ENCODE measurements at regions of chr7 and their contacts with region 1.

Region 1: GRCh38 chr7:69598081-69598486 is at the start of gene AUTS2:
- DNase-seq: peak; percentile 94
- H3K4me3 ChIP-seq: peak within 1 kb of the TSS; percentile 97
- H3K27ac ChIP-seq: peak within 1 kb of the TSS; percentile 58
- H3K4me1 ChIP-seq: peaks cover 35% of the 10 kb centered on the region
- CTCF ChIP-seq: no peak
- total RNA-seq, gene AUTS2: 34.3 and 37.9 TPM in 2 replicates

Region 2: DNA sequence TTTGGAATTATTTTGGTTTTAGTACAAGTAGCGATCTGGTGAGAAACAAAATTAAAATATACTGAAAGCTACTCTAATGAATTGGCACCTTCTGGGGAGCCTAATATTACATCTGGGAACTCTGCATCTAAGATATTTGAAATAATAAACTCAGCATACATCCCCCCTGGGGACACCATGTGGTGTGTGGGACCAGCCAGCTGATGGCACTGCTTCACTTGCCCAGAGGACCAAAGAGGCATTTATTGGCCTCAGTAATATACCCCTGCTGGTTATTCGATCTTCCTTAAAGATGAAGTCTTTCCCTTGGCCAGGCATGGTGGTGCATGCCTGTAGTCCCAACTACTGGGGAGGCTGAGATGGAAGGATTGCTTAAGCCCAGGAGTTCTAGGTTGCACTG is 194.9 kb before region 1 on chr7:
- CTCF ChIA-PET with region 1: no interaction called
- POLR2A ChIA-PET with region 1: no interaction called
- intact Hi-C with region 1: loop called (anchors 5 kb)
- DNase-seq: peak; percentile 73
- H3K4me3 ChIP-seq: no peak overlapping the region
- H3K27ac ChIP-seq: no peak overlapping the region
- H3K4me1 ChIP-seq: no peaks in the 10 kb centered on the region
- CTCF ChIP-seq: peak; percentile 82

Region 3: DNA sequence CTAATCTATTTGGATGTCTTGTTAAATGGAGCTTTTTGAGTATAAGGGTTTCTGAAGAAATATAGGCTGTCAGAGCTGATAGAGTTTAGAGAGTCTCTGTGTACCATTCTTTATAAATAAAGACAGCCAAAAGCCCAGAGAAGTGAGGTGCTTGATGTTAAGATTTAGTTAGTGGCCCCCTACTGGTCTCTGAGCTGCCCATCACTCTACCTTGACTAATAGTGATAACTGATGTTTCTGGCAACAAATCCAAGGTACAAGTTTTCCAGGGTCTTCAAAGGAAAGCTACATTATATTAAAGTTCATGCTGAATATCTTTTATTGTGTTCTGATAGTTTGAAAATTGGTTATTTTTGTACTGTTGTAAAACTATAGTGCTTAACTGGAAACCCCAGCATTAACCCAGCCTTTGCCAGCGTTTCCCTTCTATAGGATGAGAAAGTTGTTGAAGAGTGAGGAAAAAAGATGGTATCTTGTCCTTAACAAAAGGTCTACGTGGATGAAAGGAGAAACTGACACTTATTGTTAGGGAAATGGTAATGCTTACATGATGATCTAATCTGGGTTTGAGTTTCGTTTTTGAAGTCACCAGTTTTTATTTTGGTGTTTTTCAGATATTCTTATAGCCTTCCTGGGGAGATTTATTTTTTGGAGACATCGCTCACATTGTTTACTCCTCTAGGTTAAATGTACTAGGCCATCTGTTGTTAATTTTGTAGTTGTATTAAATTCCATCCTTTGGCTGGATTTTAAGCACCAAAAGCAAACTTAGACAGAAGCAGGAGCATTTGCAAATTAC is 79.2 kb after region 1 on chr7:
- CTCF ChIA-PET with region 1: no interaction called
- POLR2A ChIA-PET with region 1: no interaction called
- intact Hi-C with region 1: loop called (anchors 5 kb)
- DNase-seq: peak; percentile 61
- H3K4me3 ChIP-seq: no peak overlapping the region
- H3K27ac ChIP-seq: no peak overlapping the region
- H3K4me1 ChIP-seq: peaks cover 50% of the 10 kb centered on the region
- CTCF ChIP-seq: peak; percentile 86

Region 4: DNA sequence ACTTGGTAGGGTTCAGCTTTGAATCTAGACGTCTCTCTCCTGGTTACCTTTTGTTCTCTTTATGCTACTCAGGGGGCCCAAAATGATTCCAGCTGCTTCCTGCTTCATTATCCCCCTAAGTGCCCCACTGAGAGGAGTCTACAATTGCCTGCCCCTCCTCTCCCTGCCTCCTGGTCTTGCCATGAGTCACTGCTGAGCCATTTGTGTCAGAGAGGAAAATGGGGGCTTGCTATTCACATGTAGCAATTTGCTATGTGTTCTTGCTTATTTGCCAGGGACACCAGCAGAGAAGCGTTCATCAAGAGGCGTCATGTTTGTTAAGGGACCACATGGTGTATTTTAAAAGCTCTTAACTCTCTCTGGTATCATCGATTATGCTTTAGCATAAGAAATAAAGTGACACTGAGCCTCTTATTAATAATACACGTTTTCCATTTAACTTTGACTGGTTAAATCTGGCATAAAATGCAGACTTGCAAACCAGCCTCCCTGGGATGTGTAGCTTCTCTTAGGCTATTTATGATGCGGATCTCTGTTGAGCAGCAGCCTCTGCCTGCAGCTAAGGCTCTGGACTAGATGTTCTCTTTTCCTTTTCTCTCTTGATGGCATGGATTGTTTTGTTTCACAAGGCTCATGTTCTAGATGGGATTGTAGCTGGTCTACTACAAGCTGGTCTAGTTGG is 239.4 kb after region 1 on chr7:
- CTCF ChIA-PET with region 1: no interaction called
- POLR2A ChIA-PET with region 1: interaction called, 3 read pairs
- intact Hi-C with region 1: loop called (anchors 5 kb)
- DNase-seq: no peak
- H3K4me3 ChIP-seq: no peak overlapping the region
- H3K27ac ChIP-seq: no peak overlapping the region
- H3K4me1 ChIP-seq: peaks cover 62% of the 10 kb centered on the region
- CTCF ChIP-seq: no peak

Measured in OCI-LY7 (cell line).